Endothelial cell of umbilical vein (primary cell): ENCODE measurements at regions of chr7 and their contacts with region 1.

Region 1: GRCh38 chr7:82859106-82859850 is 303.4 kb downstream of the PCLO start:
- DNase-seq: peak; percentile 65
- H3K4me3 ChIP-seq: no peak overlapping the region
- H3K27ac ChIP-seq: peak overlapping the region; percentile 98
- H3K4me1 ChIP-seq: peaks cover 18% of the 10 kb centered on the region
- H3K27me3 ChIP-seq: no peaks in the 10 kb centered on the region
- CTCF ChIP-seq: no peak
- POLR2A ChIP-seq: no peak

Region 2: DNA sequence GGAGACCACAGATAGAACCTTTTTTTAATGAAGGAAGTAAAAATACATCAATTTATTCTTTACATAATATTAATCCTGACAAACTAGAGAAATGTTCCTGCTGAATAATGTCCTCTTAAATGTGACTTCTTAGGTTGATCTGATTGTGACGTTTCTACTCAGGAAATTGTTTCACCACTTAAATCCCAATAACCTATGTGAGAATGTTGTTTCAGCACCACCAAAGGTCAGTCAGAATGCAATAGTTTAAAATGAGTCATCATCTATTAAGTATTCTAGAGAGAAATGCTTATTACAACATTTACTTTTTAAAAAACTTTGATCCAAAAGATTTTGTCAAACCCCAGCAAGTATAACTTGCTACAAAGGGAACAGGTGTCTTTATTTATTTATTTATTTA is 260.3 kb before region 1 on chr7:
- CTCF ChIA-PET with region 1: no interaction called
- POLR2A ChIA-PET with region 1: no interaction called
- dilution Hi-C with region 1: no loop called
- intact Hi-C with region 1: loop called (anchors 1 kb)
- DNase-seq: peak; percentile 86
- H3K4me3 ChIP-seq: no peak overlapping the region
- H3K27ac ChIP-seq: no peak overlapping the region
- H3K4me1 ChIP-seq: peaks cover 30% of the 10 kb centered on the region
- H3K27me3 ChIP-seq: no peaks in the 10 kb centered on the region
- CTCF ChIP-seq: no peak
- POLR2A ChIP-seq: no peak

Region 3: GRCh38 chr7:82805527-82805960 is 53.7 kb before region 1 on chr7:
- CTCF ChIA-PET with region 1: interaction called, 9 read pairs
- POLR2A ChIA-PET with region 1: no interaction called
- dilution Hi-C with region 1: no loop called
- intact Hi-C with region 1: loop called (anchors 1 kb)
- DNase-seq: peak; percentile 89
- H3K4me3 ChIP-seq: peak overlapping the region in 1 of 3 experiments; percentile 55
- H3K27ac ChIP-seq: peak overlapping the region; percentile 76
- H3K4me1 ChIP-seq: peaks cover 13% of the 10 kb centered on the region
- H3K27me3 ChIP-seq: no peaks in the 10 kb centered on the region
- CTCF ChIP-seq: no peak
- POLR2A ChIP-seq: no peak

Region 4: DNA sequence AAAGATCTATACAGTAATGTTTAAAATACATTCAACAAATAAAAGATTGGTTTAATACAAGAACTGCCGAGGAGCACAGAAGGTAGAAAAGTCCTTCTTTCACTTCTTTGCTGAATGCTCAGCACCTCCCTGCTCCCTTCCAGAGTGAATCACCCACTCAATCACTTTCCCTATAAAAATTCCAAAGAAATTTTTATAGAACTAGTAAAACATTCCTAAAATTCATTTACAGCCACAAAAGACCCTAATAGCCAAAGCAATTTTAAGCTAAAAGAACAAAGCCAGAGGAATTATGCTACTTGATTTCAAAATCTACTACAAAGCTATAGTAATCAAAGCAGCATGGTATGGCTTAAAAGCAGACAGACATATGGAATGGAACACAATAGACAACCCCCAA is 17.4 kb before region 1 on chr7:
- CTCF ChIA-PET with region 1: interaction called, 4 read pairs
- POLR2A ChIA-PET with region 1: no interaction called
- dilution Hi-C with region 1: no loop called
- intact Hi-C with region 1: loop called (anchors 2 kb)
- DNase-seq: no peak
- H3K4me3 ChIP-seq: no peak overlapping the region
- H3K27ac ChIP-seq: no peak overlapping the region
- H3K4me1 ChIP-seq: no peaks in the 10 kb centered on the region
- H3K27me3 ChIP-seq: no peaks in the 10 kb centered on the region
- CTCF ChIP-seq: no peak
- POLR2A ChIP-seq: no peak

Region 5: DNA sequence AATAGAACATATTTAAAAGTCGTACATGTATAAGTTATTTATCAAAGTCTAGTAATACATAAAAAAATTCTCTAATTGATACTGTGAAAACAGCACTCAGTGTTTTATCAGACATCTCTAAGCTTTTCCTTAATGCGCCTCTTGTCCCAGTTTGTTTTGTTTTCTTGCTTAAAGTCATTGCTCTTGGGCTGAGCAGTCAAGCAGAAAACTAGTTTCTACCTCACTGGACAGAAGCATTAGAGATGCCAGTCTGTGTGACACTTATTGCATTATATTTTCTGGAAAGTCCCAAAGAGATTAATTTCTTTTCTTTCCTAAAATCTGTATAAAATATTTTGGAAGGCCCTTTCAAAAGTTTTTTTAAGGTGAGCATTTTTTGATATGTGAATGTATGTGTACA is 67.2 kb after region 1 on chr7:
- CTCF ChIA-PET with region 1: no interaction called
- POLR2A ChIA-PET with region 1: no interaction called
- dilution Hi-C with region 1: no loop called
- intact Hi-C with region 1: no loop called
- DNase-seq: no peak
- H3K4me3 ChIP-seq: no peak overlapping the region
- H3K27ac ChIP-seq: no peak overlapping the region
- H3K4me1 ChIP-seq: no peaks in the 10 kb centered on the region
- H3K27me3 ChIP-seq: no peaks in the 10 kb centered on the region
- CTCF ChIP-seq: no peak
- POLR2A ChIP-seq: no peak